ENCODE measurements at regions of chr4 and their contacts with region 1.

Region 1: DNA sequence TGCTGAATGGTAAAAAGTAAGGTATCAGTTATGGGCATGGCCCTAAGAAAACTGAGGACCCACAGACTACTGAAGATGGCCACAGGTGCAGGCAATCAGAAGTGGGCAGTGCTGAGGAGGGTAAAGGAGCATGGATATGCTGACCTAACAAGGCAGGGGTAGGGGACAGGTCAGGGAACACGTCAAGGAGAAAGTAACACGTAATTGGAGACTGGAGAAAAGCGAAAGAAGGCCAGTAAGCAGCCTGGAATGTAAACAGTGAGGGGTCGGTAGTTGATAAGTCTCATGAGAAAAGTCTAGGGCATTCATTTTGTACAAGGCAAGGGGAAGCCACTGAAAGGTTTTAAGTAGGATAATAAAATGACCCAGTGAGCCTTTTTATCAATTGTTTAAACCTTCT is 153.3 kb downstream of the PRDM5 start:
- DNase-seq: no peak
- H3K4me3 ChIP-seq: no peak overlapping the region
- H3K27ac ChIP-seq: no peak overlapping the region
- H3K4me1 ChIP-seq: peaks cover 44% of the 10 kb centered on the region
- CTCF ChIP-seq: no peak

Region 2: DNA sequence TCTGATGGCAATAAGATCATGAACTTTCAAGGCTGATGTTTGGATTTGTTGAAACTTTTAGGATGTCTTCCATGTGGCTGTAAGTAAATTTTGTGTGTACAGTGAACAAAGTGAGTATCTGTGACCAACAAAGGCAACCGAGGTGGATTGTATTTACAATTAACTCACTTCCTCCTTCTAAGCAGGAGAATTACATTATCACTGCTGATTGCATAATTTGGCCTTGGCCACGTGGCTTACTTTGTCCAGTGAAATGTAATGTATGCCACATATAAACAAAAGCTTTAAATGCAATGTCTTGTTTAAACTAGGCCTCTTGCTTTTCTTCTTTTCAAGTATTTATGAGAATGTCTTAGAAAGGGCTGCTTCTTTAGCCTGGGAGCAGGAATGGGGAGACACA is 636.3 kb before region 1 on chr4:
- CTCF ChIA-PET with region 1: no interaction called
- POLR2A ChIA-PET with region 1: no interaction called
- intact Hi-C with region 1: loop called (anchors 10 kb)
- DNase-seq: peak; percentile 35
- H3K4me3 ChIP-seq: no peak overlapping the region
- H3K27ac ChIP-seq: peak overlapping the region; percentile 95
- H3K4me1 ChIP-seq: peaks cover 44% of the 10 kb centered on the region
- CTCF ChIP-seq: no peak

Region 3: GRCh38 chr4:120749445-120750151 is 19.6 kb before region 1 on chr4:
- CTCF ChIA-PET with region 1: interaction called, 14 read pairs
- POLR2A ChIA-PET with region 1: interaction called, 161 read pairs
- intact Hi-C with region 1: loop called (anchors 2 kb)
- DNase-seq: peak; percentile 98
- H3K4me3 ChIP-seq: peak overlapping the region; percentile 42
- H3K27ac ChIP-seq: peak overlapping the region; percentile 97
- H3K4me1 ChIP-seq: peaks cover 42% of the 10 kb centered on the region
- CTCF ChIP-seq: no peak; the same call in 1 of the 2 replicates

Region 4: GRCh38 chr4:120809518-120809917 is 40.3 kb after region 1 on chr4:
- CTCF ChIA-PET with region 1: no interaction called
- POLR2A ChIA-PET with region 1: interaction called, 3 read pairs
- intact Hi-C with region 1: loop called (anchors 1 kb)
- DNase-seq: peak; percentile 24
- H3K4me3 ChIP-seq: no peak overlapping the region
- H3K27ac ChIP-seq: no peak overlapping the region
- H3K4me1 ChIP-seq: no peaks in the 10 kb centered on the region
- CTCF ChIP-seq: peak; percentile 84

Region 5: DNA sequence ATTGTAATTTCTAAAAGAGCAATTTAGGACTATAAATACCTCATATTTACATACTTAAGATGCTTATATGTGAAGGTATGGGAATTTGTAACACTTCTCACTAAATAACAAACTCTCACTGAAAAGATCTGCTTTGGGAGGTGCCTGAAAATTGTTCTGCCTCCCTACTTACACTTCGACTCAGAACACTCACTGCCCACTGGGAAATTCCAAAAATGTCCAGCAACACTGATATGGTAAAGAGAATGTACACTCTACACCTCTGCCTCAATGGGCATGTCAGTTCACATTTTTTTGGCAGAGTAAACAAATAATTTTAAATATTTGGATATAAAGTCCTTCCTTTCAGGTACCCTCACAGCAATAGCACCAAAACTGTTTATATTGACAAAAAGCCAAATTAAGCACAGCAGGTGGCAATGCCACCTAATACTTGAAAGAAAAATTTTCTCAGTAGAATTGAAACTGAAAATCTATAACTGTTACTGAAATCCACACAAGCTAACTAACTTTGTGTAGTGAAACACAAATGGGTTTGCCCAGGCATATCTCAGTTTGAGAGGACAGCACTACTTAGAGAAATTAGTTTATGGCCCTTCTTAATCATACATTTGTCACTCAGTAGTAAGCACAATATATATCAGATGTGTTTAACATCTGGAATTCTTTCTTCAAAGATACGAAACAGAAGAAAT is 86.2 kb after region 1 on chr4:
- CTCF ChIA-PET with region 1: no interaction called
- POLR2A ChIA-PET with region 1: interaction called, 6 read pairs
- intact Hi-C with region 1: loop called (anchors 5 kb)
- DNase-seq: peak; percentile 30
- H3K4me3 ChIP-seq: no peak overlapping the region
- H3K27ac ChIP-seq: no peak overlapping the region
- H3K4me1 ChIP-seq: peaks cover 33% of the 10 kb centered on the region
- CTCF ChIP-seq: no peak

Region 6: GRCh38 chr4:120971884-120972283 is 202.7 kb after region 1 on chr4:
- CTCF ChIA-PET with region 1: no interaction called
- POLR2A ChIA-PET with region 1: no interaction called
- intact Hi-C with region 1: no loop called
- DNase-seq: no peak
- H3K4me3 ChIP-seq: no peak overlapping the region
- H3K27ac ChIP-seq: no peak overlapping the region
- H3K4me1 ChIP-seq: no peaks in the 10 kb centered on the region
- CTCF ChIP-seq: no peak